Activated CD4-positive, alpha-beta memory T cell treated with anti-CD3 and anti-CD28 coated beads for 36 hours (primary cell): ENCODE measurements at regions of chr19 and their contacts with region 1.

Region 1: GRCh38 chr19:32224371-32225244 is 120.8 kb upstream of the ZNF507 start:
- DNase-seq: peak; percentile 66
- H3K4me3 Mint-ChIP-seq: peak overlapping the region; percentile 50
- H3K27ac Mint-ChIP-seq: no peak overlapping the region
- H3K4me1 Mint-ChIP-seq: peaks cover 9% of the 10 kb centered on the region
- H3K27me3 Mint-ChIP-seq: peaks cover 32% of the 10 kb centered on the region

Region 2: GRCh38 chr19:30682999-30683536 is 1541.5 kb before region 1 on chr19:
- CTCF ChIA-PET with region 1: interaction called, 32 read pairs
- POLR2A ChIA-PET with region 1: no interaction called
- intact Hi-C with region 1: loop called (anchors 2 kb)
- DNase-seq: peak; percentile 66
- H3K4me3 Mint-ChIP-seq: no peak overlapping the region
- H3K27ac Mint-ChIP-seq: no peak overlapping the region
- H3K4me1 Mint-ChIP-seq: no peaks in the 10 kb centered on the region
- H3K27me3 Mint-ChIP-seq: peaks cover 30% of the 10 kb centered on the region

Region 3: DNA sequence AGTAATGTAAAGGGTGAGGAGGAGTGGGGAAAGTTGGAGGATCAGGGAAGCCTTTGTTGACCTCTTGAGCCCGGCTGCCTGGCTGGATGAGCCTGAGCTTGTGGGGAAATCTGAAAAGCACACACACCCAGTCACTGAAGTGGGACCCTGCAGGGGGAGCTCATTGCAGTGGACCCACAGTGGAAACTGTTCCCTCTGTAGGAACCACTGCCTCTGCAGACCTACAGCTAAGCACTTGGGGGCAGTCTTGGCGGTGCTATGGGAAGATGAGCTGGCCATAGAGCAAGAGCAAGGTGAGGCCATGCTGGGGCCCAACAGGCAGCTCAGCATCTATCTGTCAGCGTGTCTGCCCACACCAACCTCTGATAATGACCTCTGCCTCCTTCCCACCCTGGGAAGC is 1170.2 kb before region 1 on chr19:
- CTCF ChIA-PET with region 1: interaction called, 10 read pairs
- POLR2A ChIA-PET with region 1: no interaction called
- intact Hi-C with region 1: loop called (anchors 10 kb)
- DNase-seq: peak; percentile 58
- H3K4me3 Mint-ChIP-seq: no peak overlapping the region
- H3K27ac Mint-ChIP-seq: no peak overlapping the region
- H3K4me1 Mint-ChIP-seq: no peaks in the 10 kb centered on the region
- H3K27me3 Mint-ChIP-seq: peaks cover 16% of the 10 kb centered on the region

Region 4: GRCh38 chr19:31676271-31677004 is 548.2 kb before region 1 on chr19:
- CTCF ChIA-PET with region 1: interaction called, 4 read pairs
- POLR2A ChIA-PET with region 1: no interaction called
- intact Hi-C with region 1: loop called (anchors 10 kb)
- DNase-seq: no peak
- H3K4me3 Mint-ChIP-seq: no peak overlapping the region
- H3K27ac Mint-ChIP-seq: no peak overlapping the region
- H3K4me1 Mint-ChIP-seq: no peaks in the 10 kb centered on the region
- H3K27me3 Mint-ChIP-seq: no peaks in the 10 kb centered on the region

Region 5: DNA sequence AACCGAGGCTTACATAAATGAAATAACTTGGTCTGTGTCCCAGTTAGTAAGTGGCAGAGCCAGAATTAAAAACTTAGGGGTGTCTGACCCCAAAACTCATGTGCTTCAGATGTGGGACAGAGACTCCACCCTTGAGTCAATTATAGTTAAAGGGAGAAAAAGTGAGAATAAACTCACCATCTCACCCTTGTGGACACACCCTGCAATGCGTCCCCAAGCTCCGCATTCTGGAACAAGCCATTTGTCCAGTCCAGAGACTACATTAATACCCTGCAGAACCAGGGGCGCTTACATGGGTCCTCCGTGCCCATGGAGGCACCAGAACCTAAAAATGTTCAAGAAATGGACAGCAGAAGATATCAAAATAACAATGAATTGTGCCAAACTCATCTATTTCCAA is 86.2 kb before region 1 on chr19:
- CTCF ChIA-PET with region 1: no interaction called
- POLR2A ChIA-PET with region 1: no interaction called
- intact Hi-C with region 1: no loop called
- DNase-seq: no peak
- H3K4me3 Mint-ChIP-seq: no peak overlapping the region
- H3K27ac Mint-ChIP-seq: no peak overlapping the region
- H3K4me1 Mint-ChIP-seq: no peaks in the 10 kb centered on the region
- H3K27me3 Mint-ChIP-seq: no peaks in the 10 kb centered on the region

Region 6: DNA sequence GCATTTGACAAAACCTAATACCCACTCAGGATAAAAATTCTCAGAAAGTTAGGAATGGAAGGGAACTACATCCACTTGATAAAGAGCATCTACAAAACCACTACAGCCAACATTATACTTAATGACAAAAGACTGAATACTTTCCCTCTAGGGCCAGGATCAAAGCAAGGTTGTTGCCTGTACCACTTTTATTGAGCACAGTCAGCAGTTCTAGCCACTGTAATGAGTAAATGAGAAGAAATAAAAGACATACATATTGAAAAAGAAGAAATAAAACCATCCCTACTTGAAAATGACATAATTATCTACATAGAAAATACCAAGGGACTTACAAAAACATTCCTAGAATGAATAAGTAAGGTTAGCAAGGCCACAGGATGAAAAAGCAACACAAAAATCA is 74.0 kb before region 1 on chr19:
- CTCF ChIA-PET with region 1: no interaction called
- POLR2A ChIA-PET with region 1: no interaction called
- intact Hi-C with region 1: no loop called
- DNase-seq: no peak
- H3K4me3 Mint-ChIP-seq: no peak overlapping the region
- H3K27ac Mint-ChIP-seq: no peak overlapping the region
- H3K4me1 Mint-ChIP-seq: no peaks in the 10 kb centered on the region
- H3K27me3 Mint-ChIP-seq: no peaks in the 10 kb centered on the region

Region 7: GRCh38 chr19:32238076-32238475 is 13.5 kb after region 1 on chr19:
- CTCF ChIA-PET with region 1: interaction called, 15 read pairs
- POLR2A ChIA-PET with region 1: no interaction called
- intact Hi-C with region 1: no loop called
- DNase-seq: no peak
- H3K4me3 Mint-ChIP-seq: no peak overlapping the region
- H3K27ac Mint-ChIP-seq: no peak overlapping the region
- H3K4me1 Mint-ChIP-seq: no peaks in the 10 kb centered on the region
- H3K27me3 Mint-ChIP-seq: peaks cover 4% of the 10 kb centered on the region

Region 8: GRCh38 chr19:32350473-32350865 is 125.9 kb after region 1 on chr19:
- CTCF ChIA-PET with region 1: no interaction called
- POLR2A ChIA-PET with region 1: no interaction called
- intact Hi-C with region 1: no loop called
- DNase-seq: no peak
- H3K4me3 Mint-ChIP-seq: no peak overlapping the region
- H3K27ac Mint-ChIP-seq: peak overlapping the region; percentile 30
- H3K4me1 Mint-ChIP-seq: peaks cover 81% of the 10 kb centered on the region
- H3K27me3 Mint-ChIP-seq: no peaks in the 10 kb centered on the region